PC-3 (cell line): ENCODE measurements at regions of chr5 and their contacts with region 1.

Region 1: GRCh38 chr5:79133657-79134451 is 22.2 kb downstream of the BHMT start:
- DNase-seq: peak; percentile 80
- ATAC-seq: peak; percentile 77
- H3K4me3 ChIP-seq: peak overlapping the region; percentile 53
- H3K27ac ChIP-seq: peak overlapping the region; percentile 34
- H3K4me1 ChIP-seq: peaks cover 11% of the 10 kb centered on the region
- H3K27me3 ChIP-seq: no peaks in the 10 kb centered on the region
- CTCF ChIP-seq: peak; percentile 73

Region 2: GRCh38 chr5:78984439-78985115 is 149.3 kb before region 1 on chr5:
- CTCF ChIA-PET with region 1: interaction called, 6 read pairs
- POLR2A ChIA-PET with region 1: no interaction called
- intact Hi-C with region 1: loop called (anchors 1 kb)
- DNase-seq: peak; percentile 83
- ATAC-seq: peak; percentile 73
- H3K4me3 ChIP-seq: peak overlapping the region; percentile 82
- H3K27ac ChIP-seq: peak overlapping the region; percentile 61
- H3K4me1 ChIP-seq: peaks cover 35% of the 10 kb centered on the region
- H3K27me3 ChIP-seq: no peaks in the 10 kb centered on the region
- CTCF ChIP-seq: 0 out of 2 replicates have a peak, but pooled peaks have one; percentile 18

Region 3: GRCh38 chr5:79181419-79182022 is 47.7 kb after region 1 on chr5:
- CTCF ChIA-PET with region 1: no interaction called
- POLR2A ChIA-PET with region 1: no interaction called
- intact Hi-C with region 1: loop called (anchors 5 kb)
- DNase-seq: no peak
- ATAC-seq: no peak
- H3K4me3 ChIP-seq: no peak overlapping the region
- H3K27ac ChIP-seq: no peak overlapping the region
- H3K4me1 ChIP-seq: peaks cover 12% of the 10 kb centered on the region
- H3K27me3 ChIP-seq: no peaks in the 10 kb centered on the region
- CTCF ChIP-seq: no peak

Region 4: DNA sequence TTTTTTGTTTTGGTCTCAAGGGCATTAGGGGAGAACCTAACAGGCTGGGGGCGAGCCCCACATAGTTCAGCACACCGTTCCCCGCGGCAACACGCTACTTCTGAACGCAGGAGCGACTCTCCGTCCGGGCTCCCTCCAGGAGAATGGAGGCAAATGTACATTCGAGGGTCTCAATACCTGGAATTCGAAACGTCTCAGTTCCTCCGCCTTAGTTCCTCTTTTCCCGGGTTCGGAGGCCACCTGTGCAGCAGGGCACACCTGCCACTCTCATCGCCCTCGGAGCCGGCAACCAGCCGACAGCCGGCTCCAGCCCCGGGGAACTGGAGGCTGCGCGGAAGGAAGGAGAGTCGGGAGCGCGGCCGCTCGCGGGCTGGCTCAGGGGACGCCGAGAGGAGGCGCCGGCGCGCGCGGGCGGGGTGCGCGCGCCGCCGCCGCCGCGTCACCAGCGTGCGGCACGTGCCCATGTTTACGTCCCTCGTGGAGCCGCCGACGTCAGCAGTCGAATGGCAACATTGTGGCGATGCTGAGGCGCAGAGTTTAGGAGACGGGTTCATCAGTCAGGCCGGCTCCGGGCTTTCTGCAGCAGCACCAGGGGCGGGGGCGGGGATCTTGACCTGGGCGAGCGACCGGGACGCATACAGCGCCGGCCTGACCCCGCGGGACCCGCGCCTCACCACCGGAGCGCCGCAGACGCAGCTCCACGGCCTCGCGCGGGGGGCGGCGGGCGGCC is 101.9 kb after region 1 on chr5 and contains the start of gene JMY:
- CTCF ChIA-PET with region 1: interaction called, 3 read pairs
- POLR2A ChIA-PET with region 1: no interaction called
- intact Hi-C with region 1: loop called (anchors 1 kb)
- DNase-seq: peak; percentile 73
- ATAC-seq: peak; percentile 75
- H3K4me3 ChIP-seq: peak within 1 kb of the TSS; percentile 81
- H3K27ac ChIP-seq: peak within 1 kb of the TSS; percentile 32
- H3K4me1 ChIP-seq: peaks cover 5% of the 10 kb centered on the region
- H3K27me3 ChIP-seq: no peaks in the 10 kb centered on the region
- CTCF ChIP-seq: no peak
- total RNA-seq, gene JMY: 4.3 and 5.7 TPM in 2 replicates

Region 5: GRCh38 chr5:79297661-79298060 is 163.8 kb after region 1 on chr5:
- CTCF ChIA-PET with region 1: no interaction called
- POLR2A ChIA-PET with region 1: no interaction called
- intact Hi-C with region 1: loop called (anchors 1 kb)
- DNase-seq: peak; percentile 43
- ATAC-seq: no peak
- H3K4me3 ChIP-seq: no peak overlapping the region
- H3K27ac ChIP-seq: 0 out of 2 replicates have a peak overlapping the region, but pooled peaks have one; percentile 7
- H3K4me1 ChIP-seq: peaks cover 47% of the 10 kb centered on the region
- H3K27me3 ChIP-seq: no peaks in the 10 kb centered on the region
- CTCF ChIP-seq: no peak

Region 6: GRCh38 chr5:79508354-79508753 is 374.5 kb after region 1 on chr5:
- CTCF ChIA-PET with region 1: no interaction called
- POLR2A ChIA-PET with region 1: no interaction called
- intact Hi-C with region 1: loop called (anchors 10 kb)
- DNase-seq: peak; percentile 36
- ATAC-seq: peak; percentile 6; the same call in 1 of the 2 replicates
- H3K4me3 ChIP-seq: no peak overlapping the region; the same call in 1 of the 2 replicates
- H3K27ac ChIP-seq: no peak overlapping the region
- H3K4me1 ChIP-seq: peaks cover 64% of the 10 kb centered on the region
- H3K27me3 ChIP-seq: no peaks in the 10 kb centered on the region
- CTCF ChIP-seq: no peak

Region 7: DNA sequence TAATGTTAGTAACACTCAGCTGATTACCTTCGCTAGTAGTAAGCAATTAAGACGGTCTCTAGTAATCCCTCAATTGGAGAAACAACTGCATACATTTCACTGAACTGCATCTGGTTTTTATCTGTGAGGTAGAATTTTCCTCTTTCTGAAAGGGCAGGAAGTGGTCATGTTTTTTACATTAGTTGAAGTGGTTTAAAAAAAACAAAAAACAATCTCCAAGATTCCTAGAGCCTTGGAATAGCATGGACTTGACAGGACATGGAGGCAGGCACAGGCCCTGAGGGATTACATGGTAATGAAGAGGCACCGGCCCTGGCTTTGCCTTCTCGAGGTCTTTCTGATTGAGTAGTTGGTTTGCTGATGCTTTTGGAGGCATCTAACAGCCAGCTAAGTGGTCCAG is 927.1 kb after region 1 on chr5:
- CTCF ChIA-PET with region 1: no interaction called
- POLR2A ChIA-PET with region 1: interaction called, 18 read pairs
- intact Hi-C with region 1: no loop called
- DNase-seq: no peak
- ATAC-seq: no peak
- H3K4me3 ChIP-seq: no peak overlapping the region
- H3K27ac ChIP-seq: no peak overlapping the region
- H3K4me1 ChIP-seq: no peaks in the 10 kb centered on the region
- H3K27me3 ChIP-seq: 0 out of 2 replicates have a peak, but pooled peaks cover 9% of the 10 kb centered on the region
- CTCF ChIP-seq: no peak